Activated CD8-positive, alpha-beta T cell treated with anti-CD3 and anti-CD28 coated beads for 36 hours (primary cell): ENCODE measurements at regions of chrX and their contacts with region 1.

Region 1: DNA sequence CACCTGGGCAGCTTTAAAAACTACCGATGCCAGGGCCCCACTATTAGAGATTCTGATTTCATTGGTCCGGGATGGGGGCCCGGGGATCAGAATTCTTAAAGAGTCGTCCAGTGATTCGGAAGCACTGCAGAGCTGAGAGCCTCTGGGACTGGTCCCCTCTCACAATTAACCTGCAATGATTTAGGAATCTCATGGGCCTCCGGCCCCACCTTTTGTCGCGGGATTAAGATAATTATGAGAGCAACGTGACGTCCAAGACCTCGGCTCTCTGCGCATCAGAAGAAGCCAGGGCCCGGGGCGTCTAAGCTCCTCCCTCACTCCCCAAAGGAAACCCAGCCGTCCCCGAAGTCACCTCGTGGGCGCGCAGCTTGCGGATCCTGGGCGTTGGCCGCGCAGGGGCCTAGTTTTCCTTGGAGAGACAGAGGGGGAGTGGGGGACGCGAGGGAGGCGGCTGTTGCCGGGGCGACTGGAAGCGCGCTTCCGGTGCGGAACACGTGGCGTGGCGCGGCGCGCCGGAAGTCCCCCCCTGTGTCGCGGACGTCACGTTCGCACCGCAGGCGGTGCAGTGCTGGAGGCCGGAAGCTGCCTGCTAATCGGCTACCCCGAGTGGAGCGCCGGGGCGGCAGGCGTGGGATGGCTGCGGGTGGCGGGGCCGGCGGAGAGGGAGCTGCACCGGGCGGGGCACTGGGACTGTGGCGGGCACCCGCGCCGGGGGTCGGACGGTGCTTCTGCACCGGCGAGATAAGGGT is at the start of gene GEMIN8:
- DNase-seq: peak; percentile 86
- ATAC-seq: peak; percentile 81
- H3K4me3 Mint-ChIP-seq: peak within 1 kb of the TSS; percentile 88
- H3K27ac Mint-ChIP-seq: peak within 1 kb of the TSS; percentile 97
- H3K4me1 Mint-ChIP-seq: peaks cover 27% of the 10 kb centered on the region
- H3K27me3 Mint-ChIP-seq: peaks cover 1% of the 10 kb centered on the region
- CTCF ChIP-seq: no peak
- total RNA-seq, gene GEMIN8: 14.7 to 15.5 TPM

Region 2: DNA sequence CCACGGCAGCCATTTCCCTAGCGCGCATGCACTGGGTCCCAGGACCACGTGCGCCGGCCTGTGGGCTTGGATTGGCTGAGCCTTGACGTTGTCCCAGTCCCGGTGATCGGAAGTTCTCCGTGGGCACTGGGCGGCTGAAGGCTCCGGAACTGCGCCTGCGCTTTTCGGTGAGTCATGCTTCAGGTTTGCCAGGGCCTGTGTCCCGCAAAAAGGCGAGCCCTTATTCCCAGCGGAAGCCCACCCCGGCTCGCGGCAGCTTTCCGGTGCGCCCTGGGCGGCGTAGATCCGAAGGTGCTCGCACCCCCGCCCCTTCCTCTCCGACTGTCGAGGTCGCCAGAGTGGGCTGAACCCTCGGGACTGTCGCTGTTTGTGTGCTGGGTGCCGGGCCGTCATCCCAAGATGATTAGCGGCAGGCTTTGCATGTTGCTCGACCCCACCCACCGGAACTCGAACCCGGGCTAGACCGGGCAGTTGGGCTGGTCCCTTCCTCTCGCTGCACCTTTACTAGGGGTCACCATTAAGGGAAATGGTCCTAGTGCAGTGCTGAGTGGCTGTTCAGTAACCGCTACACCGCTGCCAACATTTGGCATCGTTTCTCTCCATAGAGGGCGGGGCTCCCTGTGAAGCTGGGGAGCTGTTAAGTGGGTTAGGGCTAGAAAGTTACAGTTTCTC is 376.4 kb before region 1 on chrX and contains the start of gene TCEANC:
- CTCF ChIA-PET with region 1: no interaction called
- POLR2A ChIA-PET with region 1: interaction called, 4 read pairs
- intact Hi-C with region 1: loop called (anchors 5 kb)
- DNase-seq: peak; percentile 96
- ATAC-seq: peak; percentile 95
- H3K4me3 Mint-ChIP-seq: peak within 1 kb of the TSS; percentile 80
- H3K27ac Mint-ChIP-seq: peak within 1 kb of the TSS; percentile 90
- H3K4me1 Mint-ChIP-seq: peaks cover 23% of the 10 kb centered on the region
- H3K27me3 Mint-ChIP-seq: no peaks in the 10 kb centered on the region
- CTCF ChIP-seq: no peak
- total RNA-seq, gene TCEANC: 1.3 to 1.4 TPM

Region 3: GRCh38 chrX:13750204-13750603 is 279.4 kb before region 1 on chrX:
- CTCF ChIA-PET with region 1: interaction called, 4 read pairs
- POLR2A ChIA-PET with region 1: interaction called, 3 read pairs
- intact Hi-C with region 1: loop called (anchors 5 kb)
- DNase-seq: no peak
- ATAC-seq: no peak
- H3K4me3 Mint-ChIP-seq: no peak overlapping the region
- H3K27ac Mint-ChIP-seq: no peak overlapping the region
- H3K4me1 Mint-ChIP-seq: peaks cover 40% of the 10 kb centered on the region
- H3K27me3 Mint-ChIP-seq: no peaks in the 10 kb centered on the region
- CTCF ChIP-seq: peak; percentile 46

Region 4: GRCh38 chrX:13898083-13898482 is 131.5 kb before region 1 on chrX:
- CTCF ChIA-PET with region 1: interaction called, 17 read pairs
- POLR2A ChIA-PET with region 1: no interaction called
- intact Hi-C with region 1: loop called (anchors 5 kb)
- DNase-seq: peak; percentile 22
- ATAC-seq: no peak
- H3K4me3 Mint-ChIP-seq: no peak overlapping the region
- H3K27ac Mint-ChIP-seq: no peak overlapping the region
- H3K4me1 Mint-ChIP-seq: no peaks in the 10 kb centered on the region
- H3K27me3 Mint-ChIP-seq: peaks cover 6% of the 10 kb centered on the region
- CTCF ChIP-seq: no peak